Astrocyte of the cerebellum (primary cell): ENCODE measurements at regions of chr2 and their contacts with region 1.

Region 1: GRCh38 chr2:234500394-234501006 is 3.6 kb upstream of the ARL4C start:
- DNase-seq: no peak
- H3K4me3 ChIP-seq: no peak overlapping the region
- CTCF ChIP-seq: peak; percentile 66

Region 2: DNA sequence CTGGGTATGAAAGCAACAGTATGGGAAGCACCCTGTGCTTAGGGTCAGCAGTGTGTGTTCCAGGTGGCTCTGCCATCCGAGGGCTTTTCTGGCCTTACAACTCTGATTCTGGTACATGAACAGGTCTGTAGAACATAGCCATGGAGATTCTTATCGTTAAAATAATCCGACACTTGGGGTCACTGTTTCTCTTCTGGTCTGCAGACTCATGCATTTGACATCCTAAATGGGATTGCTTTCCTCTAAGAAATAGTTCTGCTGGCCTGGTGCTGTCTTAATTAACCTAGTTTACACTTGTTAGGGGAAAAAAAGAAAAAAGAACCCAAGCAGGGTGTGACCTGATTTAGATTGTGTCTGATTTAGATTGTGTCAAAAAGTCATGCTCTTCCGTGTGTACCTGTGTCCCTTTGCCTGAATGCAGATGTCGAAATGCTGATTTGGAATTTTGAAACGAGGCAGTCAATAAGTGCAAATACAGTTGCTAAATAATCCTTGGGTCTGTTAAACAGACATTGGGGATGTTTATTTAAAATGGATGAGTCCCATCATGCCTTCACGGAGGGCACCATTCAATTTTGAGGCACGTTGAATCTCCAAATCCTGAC is 523.7 kb before region 1 on chr2:
- in situ Hi-C with region 1: loop called (anchors 25 kb)
- DNase-seq: peak; percentile 76
- H3K4me3 ChIP-seq: no peak overlapping the region
- CTCF ChIP-seq: peak; percentile 45

Region 3: GRCh38 chr2:234135720-234136221 is 364.7 kb before region 1 on chr2:
- in situ Hi-C with region 1: loop called (anchors 25 kb)
- DNase-seq: peak; percentile 76
- H3K4me3 ChIP-seq: no peak overlapping the region
- CTCF ChIP-seq: peak; percentile 86

Region 4: DNA sequence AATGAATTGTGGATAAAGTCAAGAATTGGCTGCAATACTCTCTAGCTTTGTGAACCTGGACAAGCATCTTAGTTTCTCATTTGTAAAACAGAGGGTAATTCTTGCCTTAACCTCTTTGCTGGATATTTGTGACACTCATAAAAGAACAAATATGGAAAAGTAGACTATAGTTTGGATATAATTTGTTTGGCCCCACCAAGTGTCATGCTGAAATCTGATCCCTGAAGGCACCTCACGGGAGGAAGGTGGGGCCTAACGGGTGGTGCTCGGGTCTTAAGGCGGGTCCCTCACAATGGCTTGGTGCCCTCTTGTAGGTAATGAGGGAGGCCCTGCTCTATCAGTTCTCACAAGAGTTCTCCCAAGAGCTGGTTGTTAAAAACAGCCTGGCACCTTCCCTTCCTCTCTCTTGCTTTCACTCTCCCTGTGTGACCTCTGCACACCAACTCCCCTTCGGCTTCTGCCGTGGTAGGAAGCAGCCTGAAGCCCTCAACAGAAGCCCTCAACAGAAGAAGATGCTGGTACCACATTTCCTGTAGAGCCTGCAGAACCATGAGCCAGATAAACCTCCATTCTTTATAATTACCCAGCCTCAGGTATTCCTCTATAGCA is 41.0 kb before region 1 on chr2:
- in situ Hi-C with region 1: no loop called
- DNase-seq: no peak
- H3K4me3 ChIP-seq: no peak overlapping the region
- CTCF ChIP-seq: no peak